WTC11 (cell line): ENCODE measurements at regions of chr18 and their contacts with region 1.

Region 1: GRCh38 chr18:48605408-48605845 is 66.6 kb downstream of the CTIF start:
- DNase-seq: peak; percentile 71
- ATAC-seq: peak; percentile 100
- H3K4me3 Mint-ChIP-seq: no peak overlapping the region
- H3K27ac Mint-ChIP-seq: no peak overlapping the region
- H3K4me1 Mint-ChIP-seq: peaks cover 13% of the 10 kb centered on the region
- H3K27me3 Mint-ChIP-seq: no peaks in the 10 kb centered on the region
- CTCF ChIP-seq: no peak

Region 2: DNA sequence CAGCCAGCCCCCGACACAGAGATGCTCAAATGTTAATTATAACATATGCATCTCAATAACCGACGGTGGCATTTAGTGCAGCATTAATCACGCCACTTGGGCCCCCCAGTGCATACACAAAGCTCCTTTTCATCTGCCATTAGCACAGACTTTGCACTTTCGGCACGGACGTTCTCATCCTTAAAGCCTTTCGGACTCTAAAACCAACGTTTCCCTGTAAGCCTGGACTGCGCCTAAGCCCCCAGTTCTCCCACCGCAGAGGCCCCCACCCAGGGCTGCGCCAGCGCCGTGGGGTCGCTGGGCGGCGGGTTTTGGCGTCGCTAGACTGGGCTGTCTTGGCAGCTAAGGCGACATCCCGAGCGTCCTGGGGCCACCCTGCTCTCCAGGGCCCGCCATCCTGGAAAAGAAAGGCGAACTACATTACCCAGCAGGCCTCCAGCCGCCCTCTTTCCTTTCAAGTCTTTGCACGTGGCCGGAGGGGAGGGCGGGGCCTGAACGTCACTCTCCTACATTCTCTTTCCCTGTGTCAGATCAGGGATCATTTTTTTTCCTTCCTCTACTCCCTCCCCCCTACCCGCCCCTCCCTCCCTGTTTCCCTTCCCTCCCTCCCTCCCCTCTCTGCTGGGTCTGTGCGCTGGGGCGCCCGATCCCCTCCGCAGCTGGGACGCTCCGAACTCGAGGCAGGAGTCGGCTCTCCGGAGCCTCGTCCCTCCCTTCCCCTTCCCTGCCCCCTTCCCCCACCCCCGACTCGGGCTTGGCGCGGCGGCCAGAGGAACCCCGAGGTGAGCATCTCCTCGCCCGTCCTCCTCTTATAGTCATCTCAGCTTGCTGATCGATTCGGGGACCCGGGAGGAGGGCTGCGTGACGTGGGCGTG is 66.7 kb before region 1 on chr18 and contains the start of gene CTIF:
- CTCF ChIA-PET with region 1: interaction called, 14 read pairs
- POLR2A ChIA-PET with region 1: interaction called, 5 read pairs
- DNase-seq: peak; percentile 96
- ATAC-seq: peak; percentile 77
- H3K4me3 Mint-ChIP-seq: peak within 1 kb of the TSS; percentile 81
- H3K27ac Mint-ChIP-seq: peak within 1 kb of the TSS; percentile 78
- H3K4me1 Mint-ChIP-seq: peaks cover 46% of the 10 kb centered on the region
- H3K27me3 Mint-ChIP-seq: peaks cover 18% of the 10 kb centered on the region
- CTCF ChIP-seq: no peak
- total RNA-seq, gene CTIF: 18.9 to 28.5 TPM (median 20.4 TPM) in 3 replicates

Region 3: GRCh38 chr18:48573632-48574283 is 31.7 kb before region 1 on chr18:
- CTCF ChIA-PET with region 1: interaction called, 10 read pairs
- POLR2A ChIA-PET with region 1: no interaction called
- DNase-seq: peak; percentile 36
- ATAC-seq: peak; percentile 88
- H3K4me3 Mint-ChIP-seq: no peak overlapping the region
- H3K27ac Mint-ChIP-seq: no peak overlapping the region; the same call in 1 of the 2 replicates
- H3K4me1 Mint-ChIP-seq: peaks cover 29% of the 10 kb centered on the region
- H3K27me3 Mint-ChIP-seq: no peaks in the 10 kb centered on the region
- CTCF ChIP-seq: no peak

Region 4: GRCh38 chr18:48639772-48640432 is 34.5 kb after region 1 on chr18:
- CTCF ChIA-PET with region 1: interaction called, 15 read pairs
- POLR2A ChIA-PET with region 1: no interaction called
- DNase-seq: peak; percentile 52
- ATAC-seq: peak; percentile 51
- H3K4me3 Mint-ChIP-seq: no peak overlapping the region
- H3K27ac Mint-ChIP-seq: no peak overlapping the region
- H3K4me1 Mint-ChIP-seq: peaks cover 9% of the 10 kb centered on the region
- H3K27me3 Mint-ChIP-seq: no peaks in the 10 kb centered on the region
- CTCF ChIP-seq: 0 out of 2 replicates have a peak, but pooled peaks have one; percentile 47

Region 5: DNA sequence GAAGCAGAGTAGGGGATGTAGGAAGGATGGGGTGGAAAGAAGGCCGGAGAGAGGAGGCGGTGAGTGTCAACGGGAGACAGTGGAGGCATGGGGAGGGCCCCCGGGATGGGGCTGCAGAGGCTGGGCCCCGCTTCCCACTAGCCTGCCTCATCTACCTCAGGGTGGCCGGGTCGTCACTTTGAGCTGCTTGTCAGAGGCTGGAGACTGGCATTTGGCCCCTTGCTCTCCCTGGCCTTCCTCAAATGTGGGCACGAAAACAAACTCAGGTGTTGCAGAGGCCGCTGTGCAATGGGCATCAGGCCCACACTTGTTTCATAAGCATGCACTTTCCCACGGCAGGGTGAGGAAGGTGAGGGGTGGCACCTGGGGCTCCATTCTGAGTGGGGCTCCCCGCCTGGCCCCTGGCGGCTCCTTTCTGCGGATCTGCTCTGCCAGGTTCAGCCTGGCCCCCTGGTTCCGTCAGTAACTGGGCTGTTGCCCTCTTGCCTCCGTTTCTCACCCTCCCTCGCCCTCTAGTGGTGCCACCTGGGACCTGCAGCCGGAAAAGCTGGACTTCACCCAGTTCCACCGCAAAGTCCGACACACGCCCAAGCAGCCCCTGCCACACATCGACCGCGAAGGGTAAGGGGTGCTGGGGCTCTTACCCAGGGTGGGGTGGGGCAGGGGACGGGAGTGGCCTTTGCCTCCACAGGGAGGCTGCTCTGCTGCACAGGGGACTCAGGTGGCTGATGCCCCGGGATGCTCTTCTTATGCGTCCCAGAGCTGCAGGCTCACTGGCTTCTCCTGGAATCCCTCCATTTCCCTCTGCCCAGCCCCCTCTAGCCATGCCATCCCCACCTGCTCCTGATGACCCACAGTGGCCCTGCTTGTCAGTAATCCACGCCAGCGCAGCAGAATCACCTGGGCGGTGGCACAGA is 58.8 kb after region 1 on chr18:
- CTCF ChIA-PET with region 1: interaction called, 28 read pairs
- POLR2A ChIA-PET with region 1: no interaction called
- DNase-seq: peak; percentile 92
- ATAC-seq: peak; percentile 66
- H3K4me3 Mint-ChIP-seq: no peak overlapping the region
- H3K27ac Mint-ChIP-seq: no peak overlapping the region
- H3K4me1 Mint-ChIP-seq: peaks cover 18% of the 10 kb centered on the region
- H3K27me3 Mint-ChIP-seq: no peaks in the 10 kb centered on the region
- CTCF ChIP-seq: peak; percentile 94

Region 6: DNA sequence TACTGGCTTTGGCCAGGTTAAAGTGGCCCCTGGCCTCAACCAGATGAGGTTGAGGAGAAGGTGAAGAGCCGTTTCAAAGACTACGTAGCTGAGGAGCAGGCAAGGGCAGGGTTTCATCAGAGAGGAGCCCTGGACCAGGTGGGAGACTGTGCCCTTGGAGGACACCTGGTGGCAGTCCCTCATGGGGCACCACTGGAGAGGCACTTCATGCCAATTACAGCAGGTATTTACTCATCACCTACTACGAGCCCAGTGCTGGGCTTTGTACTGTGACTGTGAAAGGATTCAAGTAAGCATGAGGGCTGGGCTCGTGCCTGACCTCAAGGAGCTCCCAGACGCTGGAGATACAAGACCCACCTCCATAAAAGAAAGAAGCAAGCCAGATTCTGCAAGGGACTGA is 307.8 kb after region 1 on chr18:
- CTCF ChIA-PET with region 1: no interaction called
- POLR2A ChIA-PET with region 1: no interaction called
- DNase-seq: no peak
- ATAC-seq: peak; percentile 7; the same call in 1 of the 2 replicates
- H3K4me3 Mint-ChIP-seq: no peak overlapping the region
- H3K27ac Mint-ChIP-seq: no peak overlapping the region
- H3K4me1 Mint-ChIP-seq: peaks cover 18% of the 10 kb centered on the region
- H3K27me3 Mint-ChIP-seq: no peaks in the 10 kb centered on the region
- CTCF ChIP-seq: no peak